Activated T-helper 1 cell treated with anti-CD3 and anti-CD28 coated beads, Interleukin-12 subunit alpha, Interleukin-12 subunit beta, Interleukin-2, Interleukin-4 antibody, amounts not matched to agents 30 ng/mL and 10 ng/mL and 1 ng/mL, durations not matched to agents 14 hours and 24 hours and 36 hours (primary cell): ENCODE measurements at regions of chrX and their contacts with region 1.

Region 1: GRCh38 chrX:57121162-57121741 is at the start of gene SPIN2B:
- DNase-seq: peak; percentile 72
- H3K4me3 Mint-ChIP-seq: peak within 1 kb of the TSS; percentile 91
- H3K27ac Mint-ChIP-seq: peak within 1 kb of the TSS; percentile 84
- H3K4me1 Mint-ChIP-seq: peaks cover 7% of the 10 kb centered on the region
- H3K27me3 Mint-ChIP-seq: no peaks in the 10 kb centered on the region
- total RNA-seq, gene SPIN2B: 12.1 and 12.7 TPM in 2 replicates

Region 2: DNA sequence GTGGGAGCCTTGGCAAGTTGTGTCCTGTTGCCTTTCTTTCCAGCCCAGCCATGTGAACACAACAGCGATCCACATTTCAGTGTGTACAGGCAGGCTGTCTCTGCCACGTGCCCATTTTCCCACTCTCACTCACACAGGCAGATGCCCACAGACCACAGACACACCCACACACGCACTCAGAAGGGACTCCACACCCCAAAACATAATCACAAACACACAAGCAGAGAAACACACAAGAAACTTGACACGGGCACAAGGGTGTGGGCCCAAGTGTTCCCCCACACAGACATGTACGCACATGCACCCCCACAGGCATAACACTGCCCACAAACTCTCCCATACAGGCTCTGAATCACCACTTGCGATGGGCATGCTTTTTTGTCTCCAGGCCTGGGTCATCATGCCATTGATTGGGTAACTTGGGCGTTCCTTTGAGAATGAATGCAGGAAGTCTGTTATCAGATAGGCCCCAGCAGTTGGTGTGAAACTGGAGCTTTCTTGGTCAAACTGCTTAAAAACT is 307.9 kb before region 1 on chrX:
- intact Hi-C with region 1: loop called (anchors 2 kb)
- DNase-seq: peak; percentile 32
- H3K4me3 Mint-ChIP-seq: peak overlapping the region; percentile 80
- H3K27ac Mint-ChIP-seq: peak overlapping the region; percentile 97
- H3K4me1 Mint-ChIP-seq: peaks cover 38% of the 10 kb centered on the region
- H3K27me3 Mint-ChIP-seq: no peaks in the 10 kb centered on the region

Region 3: DNA sequence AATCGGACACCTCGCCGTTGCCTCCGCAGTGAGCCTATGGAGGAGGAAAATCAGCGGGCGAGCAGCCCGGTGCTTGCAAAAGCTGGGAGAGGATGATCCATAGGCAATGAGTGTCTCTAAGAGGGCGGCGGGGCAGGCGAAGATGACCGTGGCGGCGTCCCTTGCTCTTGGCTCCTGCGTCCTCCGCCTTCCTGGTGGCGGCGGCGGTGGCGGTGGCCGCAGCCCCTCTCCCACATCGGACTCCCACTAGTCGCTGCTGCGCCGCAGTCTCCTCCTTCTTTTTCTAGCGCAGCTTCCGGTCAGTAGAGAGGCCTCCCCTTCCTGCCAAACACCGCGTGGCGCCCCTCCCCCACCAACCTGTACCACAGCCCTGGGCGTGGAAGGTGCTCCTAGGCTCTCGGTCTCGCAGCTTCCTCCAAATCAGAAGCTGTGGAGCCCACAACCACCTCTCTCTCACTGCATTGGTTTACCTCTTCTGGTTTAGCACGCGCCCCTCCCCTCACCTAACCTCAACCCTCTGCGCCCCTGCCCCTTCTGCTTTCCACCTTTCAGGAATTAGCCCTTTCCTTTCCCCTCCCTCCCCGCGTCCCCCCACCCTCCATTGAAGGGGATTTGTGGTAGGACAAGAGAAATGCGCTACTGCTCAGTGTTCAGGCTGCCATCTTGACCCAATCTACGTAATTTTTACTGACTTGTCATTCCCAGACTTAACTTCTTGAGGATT is 125.8 kb before region 1 on chrX and contains the start of gene SPIN3:
- intact Hi-C with region 1: loop called (anchors 1 kb)
- DNase-seq: peak; percentile 42
- H3K4me3 Mint-ChIP-seq: peak within 1 kb of the TSS; percentile 90
- H3K27ac Mint-ChIP-seq: peak within 1 kb of the TSS; percentile 83
- H3K4me1 Mint-ChIP-seq: peaks cover 18% of the 10 kb centered on the region
- H3K27me3 Mint-ChIP-seq: no peaks in the 10 kb centered on the region
- total RNA-seq, gene SPIN3: 9.4 and 9.6 TPM in 2 replicates

Region 4: DNA sequence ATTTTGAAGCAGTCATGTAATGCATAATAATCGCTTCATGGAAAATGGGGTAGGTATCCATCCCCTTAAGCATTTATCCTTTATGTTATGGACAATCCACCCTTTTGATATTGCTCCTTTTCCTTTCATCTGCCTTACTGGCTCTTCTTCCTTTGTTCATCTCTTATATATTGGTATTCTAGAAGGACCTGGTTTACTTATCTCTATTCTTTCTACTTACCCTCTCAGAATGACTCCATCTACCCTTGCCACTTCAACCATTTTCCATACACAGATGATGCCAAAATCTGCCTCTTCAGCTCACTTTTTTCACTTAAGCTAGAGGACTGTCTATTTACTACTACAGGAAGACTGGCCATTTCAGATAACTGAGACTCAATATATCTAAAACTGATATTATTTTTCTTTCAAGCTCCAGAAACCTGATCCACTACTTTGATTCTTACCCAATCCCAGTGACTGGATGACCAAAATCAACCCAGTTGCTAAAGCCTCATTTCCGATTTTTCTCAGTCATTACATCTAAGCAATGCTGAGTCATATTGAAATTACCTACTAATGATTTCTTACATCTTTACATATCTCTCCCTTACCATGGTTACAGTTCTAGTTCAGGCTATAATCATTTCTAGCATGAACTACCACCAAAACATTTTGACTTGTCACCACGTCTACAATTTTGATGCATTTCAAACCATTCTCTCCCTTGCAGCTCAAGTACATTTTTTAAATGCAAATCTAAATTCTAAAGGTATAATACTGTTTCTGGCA is 259.0 kb after region 1 on chrX:
- intact Hi-C with region 1: loop called (anchors 10 kb)
- DNase-seq: no peak
- H3K4me3 Mint-ChIP-seq: no peak overlapping the region
- H3K27ac Mint-ChIP-seq: peak overlapping the region; percentile 85
- H3K4me1 Mint-ChIP-seq: peaks cover 16% of the 10 kb centered on the region
- H3K27me3 Mint-ChIP-seq: no peaks in the 10 kb centered on the region

Region 5: DNA sequence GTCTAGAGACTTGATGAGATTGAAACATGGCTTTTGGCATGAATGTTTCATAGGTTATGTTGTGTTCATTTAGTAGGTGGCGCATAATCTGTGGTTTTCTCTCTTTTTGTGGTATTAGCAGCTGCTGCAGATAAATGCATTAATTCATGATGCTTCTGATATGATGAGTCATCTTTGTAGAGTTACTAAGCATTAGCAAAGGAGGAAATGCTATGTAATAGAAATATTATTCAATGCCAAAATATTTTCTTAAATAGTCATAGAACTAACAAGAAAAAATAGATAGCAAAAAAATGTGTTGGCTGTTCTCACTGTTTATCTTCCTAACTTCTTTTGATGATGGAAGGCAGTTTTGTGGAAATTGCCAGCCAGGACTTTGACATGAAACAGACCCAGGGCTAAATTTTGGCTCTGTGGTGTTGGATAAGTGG is 474.1 kb after region 1 on chrX:
- intact Hi-C with region 1: loop called (anchors 2 kb)
- DNase-seq: no peak
- H3K4me3 Mint-ChIP-seq: peak overlapping the region; percentile 78
- H3K27ac Mint-ChIP-seq: peak overlapping the region; percentile 67
- H3K4me1 Mint-ChIP-seq: peaks cover 34% of the 10 kb centered on the region
- H3K27me3 Mint-ChIP-seq: no peaks in the 10 kb centered on the region

Region 6: GRCh38 chrX:57906790-57907189 is 785.5 kb after region 1 on chrX:
- intact Hi-C with region 1: loop called (anchors 5 kb)
- DNase-seq: no peak
- H3K4me3 Mint-ChIP-seq: peak overlapping the region; percentile 53
- H3K27ac Mint-ChIP-seq: no peak overlapping the region
- H3K4me1 Mint-ChIP-seq: peaks cover 39% of the 10 kb centered on the region
- H3K27me3 Mint-ChIP-seq: no peaks in the 10 kb centered on the region